ENCODE measurements at regions of chr20 and their contacts with region 1.

Region 1: GRCh38 chr20:10316582-10316981 is 98.0 kb downstream of the SNAP25 start:
- DNase-seq: peak; percentile 78
- ATAC-seq: peak; percentile 95
- H3K4me3 ChIP-seq: no peak overlapping the region
- H3K27ac ChIP-seq: no peak overlapping the region
- H3K4me1 ChIP-seq: peaks cover 24% of the 10 kb centered on the region
- H3K27me3 ChIP-seq: no peaks in the 10 kb centered on the region
- CTCF ChIP-seq: peak; percentile 93
- EP300 ChIP-seq: no peak
- POLR2A ChIP-seq: no peak
- RAD21 ChIP-seq: peak; percentile 95

Region 2: DNA sequence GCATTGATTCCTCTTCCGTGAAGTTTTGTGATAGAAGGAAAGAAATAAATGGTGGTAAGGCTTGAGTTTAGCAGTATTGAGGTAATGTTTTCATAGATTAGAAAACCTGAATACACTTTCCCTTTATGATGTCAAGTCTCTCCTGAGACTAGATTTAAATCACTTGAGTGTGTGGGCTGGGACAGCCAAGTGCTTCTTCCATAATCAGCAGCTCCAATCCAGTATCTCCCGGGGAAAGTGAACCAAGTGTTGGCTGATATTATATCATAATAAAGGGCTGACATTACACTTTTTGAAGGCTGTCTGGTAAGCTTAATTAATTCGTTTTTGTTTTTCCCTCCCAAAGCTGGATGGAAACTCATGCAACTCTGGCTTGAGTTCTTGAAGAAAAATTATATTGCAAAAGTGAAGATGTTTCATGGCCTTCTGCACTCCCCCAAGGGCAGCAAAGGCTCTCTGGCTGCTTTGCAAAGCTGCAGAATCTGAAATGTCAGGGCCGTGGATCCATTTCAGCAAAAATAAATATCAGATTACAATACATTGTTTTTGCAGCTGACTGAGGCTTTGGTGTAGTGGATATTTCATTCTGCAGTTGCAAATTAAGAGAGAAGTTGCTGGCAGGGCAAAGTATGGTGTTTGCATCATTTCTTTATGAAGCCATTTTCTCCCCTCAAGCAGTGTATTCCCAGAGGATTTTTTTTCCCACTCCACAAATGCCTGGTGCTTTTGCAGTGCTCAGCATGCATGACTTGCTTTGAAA is 16.3 kb after region 1 on chr20:
- CTCF ChIA-PET with region 1: no interaction called
- POLR2A ChIA-PET with region 1: no interaction called
- in situ Hi-C with region 1: no loop called
- intact Hi-C with region 1: no loop called
- DNase-seq: no peak
- ATAC-seq: no peak
- H3K4me3 ChIP-seq: no peak overlapping the region
- H3K27ac ChIP-seq: no peak overlapping the region
- H3K4me1 ChIP-seq: peaks cover 16% of the 10 kb centered on the region
- H3K27me3 ChIP-seq: no peaks in the 10 kb centered on the region
- CTCF ChIP-seq: no peak
- EP300 ChIP-seq: no peak
- POLR2A ChIP-seq: no peak
- RAD21 ChIP-seq: no peak

Region 3: DNA sequence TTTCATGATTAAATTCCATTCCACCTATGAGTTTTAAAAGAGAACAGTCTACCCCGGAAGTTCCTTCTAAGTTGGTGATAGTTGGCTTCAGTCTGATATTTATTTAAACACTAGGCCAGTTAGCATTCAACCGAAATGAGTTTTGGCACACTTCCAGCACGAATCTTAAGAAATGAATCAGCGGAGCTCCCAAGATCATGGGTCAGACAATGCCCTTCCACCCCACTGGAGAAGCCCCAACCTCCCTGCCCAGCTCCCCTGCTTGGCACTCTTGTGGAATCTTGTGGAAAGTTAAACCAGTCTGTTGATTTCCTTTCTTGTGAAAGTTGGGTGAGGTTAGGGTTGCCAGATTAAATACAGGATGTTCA is 53.1 kb after region 1 on chr20:
- CTCF ChIA-PET with region 1: no interaction called
- POLR2A ChIA-PET with region 1: no interaction called
- in situ Hi-C with region 1: no loop called
- intact Hi-C with region 1: loop called (anchors 5 kb)
- DNase-seq: no peak
- ATAC-seq: peak; percentile 14
- H3K4me3 ChIP-seq: peak overlapping the region; percentile 2 to 54 (median 28); a peak in 4 of 6 replicates
- H3K27ac ChIP-seq: peak overlapping the region; percentile 70
- H3K4me1 ChIP-seq: peaks cover 76% of the 10 kb centered on the region
- H3K27me3 ChIP-seq: no peaks in the 10 kb centered on the region
- CTCF ChIP-seq: no peak
- EP300 ChIP-seq: no peak
- POLR2A ChIP-seq: no peak
- RAD21 ChIP-seq: no peak

Region 4: GRCh38 chr20:10404023-10404628 is 87.5 kb after region 1 on chr20:
- CTCF ChIA-PET with region 1: interaction called, 5 read pairs
- POLR2A ChIA-PET with region 1: no interaction called
- in situ Hi-C with region 1: no loop called
- intact Hi-C with region 1: loop called (anchors 2 kb)
- DNase-seq: no peak
- ATAC-seq: peak; percentile 90
- H3K4me3 ChIP-seq: no peak overlapping the region
- H3K27ac ChIP-seq: no peak overlapping the region
- H3K4me1 ChIP-seq: peaks cover 2% of the 10 kb centered on the region
- H3K27me3 ChIP-seq: no peaks in the 10 kb centered on the region
- CTCF ChIP-seq: peak; percentile 48
- EP300 ChIP-seq: no peak
- POLR2A ChIP-seq: no peak
- RAD21 ChIP-seq: peak; percentile 23; the same call in 1 of the 2 replicates

Region 5: GRCh38 chr20:10412591-10413408 is 96.2 kb after region 1 on chr20:
- CTCF ChIA-PET with region 1: interaction called, 10 read pairs
- POLR2A ChIA-PET with region 1: no interaction called
- in situ Hi-C with region 1: no loop called
- intact Hi-C with region 1: loop called (anchors 1 kb)
- DNase-seq: no peak
- ATAC-seq: peak; percentile 55; the same call in 2 of the 3 replicates
- H3K4me3 ChIP-seq: no peak overlapping the region
- H3K27ac ChIP-seq: no peak overlapping the region
- H3K4me1 ChIP-seq: 0 out of 2 replicates have a peak, but pooled peaks cover 7% of the 10 kb centered on the region
- H3K27me3 ChIP-seq: no peaks in the 10 kb centered on the region
- CTCF ChIP-seq: peak; percentile 60
- EP300 ChIP-seq: no peak
- POLR2A ChIP-seq: 0 out of 4 replicates have a peak, but pooled peaks of 1 of the 2 experiments have one; percentile 23
- RAD21 ChIP-seq: no peak

Region 6: DNA sequence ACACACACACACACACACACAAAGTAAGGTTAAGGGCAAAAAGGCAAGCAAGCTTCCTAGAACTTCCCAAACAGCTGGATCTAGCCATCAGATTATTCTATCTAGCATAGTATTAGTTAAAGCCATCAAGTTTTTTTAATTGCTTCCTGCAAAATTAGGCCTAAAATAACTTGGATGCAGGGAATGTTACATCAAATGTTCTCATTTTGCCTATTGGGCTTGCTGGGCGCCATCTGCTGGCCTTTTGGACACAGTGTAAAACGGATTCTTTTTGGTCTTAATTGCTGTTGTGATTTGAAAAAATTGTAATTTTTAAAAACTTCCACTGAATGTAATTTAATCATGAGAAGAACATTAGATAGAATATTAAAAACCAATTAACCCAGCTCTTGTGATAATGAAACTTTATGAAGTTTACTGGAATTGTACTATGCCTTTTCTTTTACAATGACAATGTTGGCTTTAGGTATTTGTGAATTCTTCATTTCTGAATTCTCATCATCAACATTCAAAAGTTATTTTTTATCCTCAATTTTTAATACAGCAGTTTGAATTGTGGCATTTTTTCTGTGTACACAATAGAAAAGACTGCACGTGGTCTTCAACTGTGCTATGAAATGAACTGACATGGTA is 110.6 kb after region 1 on chr20:
- CTCF ChIA-PET with region 1: interaction called, 59 read pairs
- POLR2A ChIA-PET with region 1: interaction called, 4 read pairs
- in situ Hi-C with region 1: loop called (anchors 5 kb)
- intact Hi-C with region 1: loop called (anchors 1 kb)
- DNase-seq: peak; percentile 71
- ATAC-seq: peak; percentile 42; the same call in 1 of the 3 replicates
- H3K4me3 ChIP-seq: no peak overlapping the region
- H3K27ac ChIP-seq: no peak overlapping the region
- H3K4me1 ChIP-seq: peaks cover 65% of the 10 kb centered on the region
- H3K27me3 ChIP-seq: no peaks in the 10 kb centered on the region
- CTCF ChIP-seq: peak; percentile 83
- EP300 ChIP-seq: no peak
- POLR2A ChIP-seq: no peak
- RAD21 ChIP-seq: peak; percentile 84

Region 7: DNA sequence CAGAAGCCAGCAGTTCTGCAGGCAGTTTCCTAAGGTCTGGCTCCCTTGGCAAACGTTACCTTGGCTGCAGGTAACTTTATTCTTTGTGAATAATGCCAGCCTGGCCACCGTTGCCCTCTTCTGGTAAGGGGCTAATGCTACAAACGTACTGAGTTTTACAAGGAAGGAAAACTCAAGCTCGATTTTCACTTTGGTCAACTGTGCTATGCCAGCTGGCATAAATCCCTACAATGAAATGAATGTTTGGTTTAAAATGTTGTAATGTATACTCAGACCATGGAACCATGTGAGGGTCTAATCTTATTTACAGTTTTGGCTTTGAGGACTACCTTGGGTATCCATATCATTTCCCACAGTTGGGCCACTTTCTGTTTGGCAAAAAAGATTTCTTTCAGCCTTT is 219.9 kb after region 1 on chr20:
- CTCF ChIA-PET with region 1: interaction called, 4 read pairs
- POLR2A ChIA-PET with region 1: no interaction called
- in situ Hi-C with region 1: no loop called
- intact Hi-C with region 1: loop called (anchors 1 kb)
- DNase-seq: peak; percentile 61
- ATAC-seq: peak; percentile 12; the same call in 1 of the 3 replicates
- H3K4me3 ChIP-seq: peak overlapping the region in 1 of 3 experiments; percentile 6; a peak in 1 of 6 replicates
- H3K27ac ChIP-seq: peak overlapping the region; percentile 13
- H3K4me1 ChIP-seq: peaks cover 63% of the 10 kb centered on the region
- H3K27me3 ChIP-seq: no peaks in the 10 kb centered on the region
- CTCF ChIP-seq: peak; percentile 77
- EP300 ChIP-seq: no peak
- POLR2A ChIP-seq: no peak
- RAD21 ChIP-seq: peak; percentile 76

Region 8: GRCh38 chr20:11544029-11544678 is 1227.6 kb after region 1 on chr20:
- CTCF ChIA-PET with region 1: interaction called, 4 read pairs
- POLR2A ChIA-PET with region 1: no interaction called
- in situ Hi-C with region 1: loop called (anchors 10 kb)
- intact Hi-C with region 1: loop called (anchors 5 kb)
- DNase-seq: peak; percentile 72
- ATAC-seq: peak; percentile 88
- H3K4me3 ChIP-seq: no peak overlapping the region
- H3K27ac ChIP-seq: no peak overlapping the region
- H3K4me1 ChIP-seq: peaks cover 12% of the 10 kb centered on the region
- H3K27me3 ChIP-seq: no peaks in the 10 kb centered on the region; a peak in 1 of 5 replicates
- CTCF ChIP-seq: peak; percentile 85
- EP300 ChIP-seq: no peak
- POLR2A ChIP-seq: no peak
- RAD21 ChIP-seq: peak; percentile 41; the same call in 1 of the 2 replicates

Measured in HepG2 (cell line).